ENCODE measurements at regions of chr9 and their contacts with region 1.

Region 1: GRCh38 chr9:89597711-89598625 is 6.8 kb upstream of the GADD45G start:
- DNase-seq: peak in 3 of 5 donors; percentile 43 to 56 (median 46)
- ATAC-seq: peak; percentile 33 to 61 (median 58)
- H3K4me3 ChIP-seq: no peak overlapping the region
- H3K27ac ChIP-seq: no peak overlapping the region
- H3K4me1 ChIP-seq: peaks cover 0 to 3% (median 0%) of the 10 kb centered on the region in 12 donors
- H3K27me3 ChIP-seq: peaks cover 0 to 3% (median 0%) of the 10 kb centered on the region in 9 donors
- CTCF ChIP-seq: peak; percentile 70 to 88 (median 80)
- POLR2A ChIP-seq: no peak

Region 2: GRCh38 chr9:89218040-89218928 is 379.7 kb before region 1 on chr9:
- intact Hi-C with region 1: no loop called
- DNase-seq: no peak
- ATAC-seq: no peak
- H3K4me3 ChIP-seq: no peak overlapping the region
- H3K27ac ChIP-seq: no peak overlapping the region
- H3K4me1 ChIP-seq: no peaks in the 10 kb centered on the region
- H3K27me3 ChIP-seq: no peaks in the 10 kb centered on the region
- CTCF ChIP-seq: no peak
- POLR2A ChIP-seq: no peak

Region 3: DNA sequence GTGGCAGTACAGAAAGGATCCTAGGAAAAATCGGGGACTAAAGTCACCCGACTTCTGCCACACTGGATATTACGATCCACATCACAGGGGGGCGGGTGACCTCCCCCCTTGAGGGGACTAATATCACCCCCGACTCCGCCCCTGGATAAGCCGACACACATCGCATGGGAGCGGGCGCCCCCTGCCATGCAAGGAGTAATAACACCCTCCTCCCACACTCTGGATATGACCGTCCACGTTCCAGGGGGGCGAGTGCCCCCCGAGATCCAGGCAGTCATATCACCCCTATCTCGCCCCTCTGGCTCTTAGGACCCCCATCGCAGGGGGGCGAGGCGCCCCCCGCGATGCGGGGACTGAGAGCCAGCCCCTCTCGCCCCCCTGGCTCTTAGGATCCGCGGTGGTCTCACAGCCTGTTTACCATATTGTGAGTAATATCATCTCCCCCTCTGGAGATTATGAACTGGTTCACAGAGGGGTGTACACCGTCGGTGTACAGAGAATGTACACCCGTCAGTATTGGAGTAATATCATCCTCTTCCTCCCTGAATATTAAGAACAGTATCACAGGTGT is 621.7 kb after region 1 on chr9:
- intact Hi-C with region 1: loop called in 1 of 10 experiments (anchors 10 kb)
- DNase-seq: peak in 1 of 5 donors; percentile 31
- ATAC-seq: peak in 1 of 4 donors; percentile 44
- H3K4me3 ChIP-seq: no peak overlapping the region
- H3K27ac ChIP-seq: no peak overlapping the region
- H3K4me1 ChIP-seq: no peaks in the 10 kb centered on the region
- H3K27me3 ChIP-seq: peaks cover 0 to 16% (median 6%) of the 10 kb centered on the region in 9 donors
- CTCF ChIP-seq: peak; percentile 23 to 50 (median 34)
- POLR2A ChIP-seq: no peak

Region 4: GRCh38 chr9:90642570-90643539 is 1044.9 kb after region 1 on chr9 and contains the start of gene DIRAS2:
- intact Hi-C with region 1: loop called in 1 of 10 experiments (anchors 10 kb)
- DNase-seq: peak in 4 of 5 donors; percentile 13 to 72 (median 30)
- ATAC-seq: peak; percentile 61 to 93 (median 88)
- H3K4me3 ChIP-seq: peak within 1 kb of the TSS; percentile 10 to 55 (median 46)
- H3K27ac ChIP-seq: no peak within 1 kb of the TSS
- H3K4me1 ChIP-seq: peaks cover 0 to 10% (median 0%) of the 10 kb centered on the region in 12 donors
- H3K27me3 ChIP-seq: peaks cover 0 to 64% (median 6%) of the 10 kb centered on the region in 9 donors
- CTCF ChIP-seq: peak in 9 of 12 donors; percentile 7 to 40 (median 21)
- POLR2A ChIP-seq: no peak
- total RNA-seq, gene DIRAS2: 0.09 to 0.96 (median 0.15) TPM in 4 of 9 donors, not detected in the others

Region 5: GRCh38 chr9:90767523-90768100 is 1169.6 kb after region 1 on chr9:
- intact Hi-C with region 1: loop called in 1 of 10 experiments (anchors 10 kb)
- DNase-seq: no peak
- ATAC-seq: no peak
- H3K4me3 ChIP-seq: no peak overlapping the region
- H3K27ac ChIP-seq: no peak overlapping the region
- H3K4me1 ChIP-seq: peaks cover 0 to 14% (median 0%) of the 10 kb centered on the region in 12 donors
- H3K27me3 ChIP-seq: peaks cover 0 to 6% (median 0%) of the 10 kb centered on the region in 9 donors
- CTCF ChIP-seq: no peak
- POLR2A ChIP-seq: no peak

Region 6: DNA sequence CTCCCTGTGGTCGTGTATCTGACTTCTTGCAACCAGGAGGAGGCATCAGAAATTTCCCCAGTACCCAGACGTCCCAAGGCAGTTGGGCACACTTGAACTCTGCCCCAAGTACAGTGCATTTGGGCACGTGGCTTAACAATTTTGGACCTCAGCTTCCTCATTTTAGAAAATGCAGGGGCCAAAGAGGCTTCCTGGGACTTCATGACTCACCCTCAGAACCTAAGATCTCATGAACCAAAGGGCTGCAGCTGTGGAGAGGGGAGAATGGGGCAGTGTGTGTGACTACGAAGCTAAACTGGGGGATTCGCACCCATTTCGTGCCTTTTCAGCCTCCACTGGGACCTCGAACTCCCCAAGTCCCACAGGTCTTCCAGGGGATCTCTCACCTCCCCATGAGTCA is 1262.9 kb after region 1 on chr9:
- intact Hi-C with region 1: loop called in 1 of 10 experiments (anchors 10 kb)
- DNase-seq: no peak
- ATAC-seq: peak in 2 of 4 donors; percentile 40 to 42
- H3K4me3 ChIP-seq: no peak overlapping the region
- H3K27ac ChIP-seq: peak overlapping the region in 1 of 12 donors; percentile 46
- H3K4me1 ChIP-seq: peaks cover 0 to 29% (median 0%) of the 10 kb centered on the region in 12 donors
- H3K27me3 ChIP-seq: no peaks in the 10 kb centered on the region
- CTCF ChIP-seq: no peak
- POLR2A ChIP-seq: no peak

Region 7: GRCh38 chr9:90870621-90871326 is 1272.8 kb after region 1 on chr9:
- intact Hi-C with region 1: loop called in 7 of 10 experiments (anchors 5 to 10 kb)
- DNase-seq: no peak
- ATAC-seq: peak in 2 of 4 donors; percentile 32 to 36
- H3K4me3 ChIP-seq: no peak overlapping the region
- H3K27ac ChIP-seq: no peak overlapping the region
- H3K4me1 ChIP-seq: peaks cover 0 to 9% (median 0%) of the 10 kb centered on the region in 12 donors
- H3K27me3 ChIP-seq: peaks cover 0 to 5% (median 0%) of the 10 kb centered on the region in 9 donors
- CTCF ChIP-seq: peak; percentile 72 to 93 (median 86)
- POLR2A ChIP-seq: no peak

Measured in heart left ventricle (tissue), 16 donors.